Thyroid gland (tissue), 4 donors: ENCODE measurements at regions of chrX and their contacts with region 1.

Region 1: DNA sequence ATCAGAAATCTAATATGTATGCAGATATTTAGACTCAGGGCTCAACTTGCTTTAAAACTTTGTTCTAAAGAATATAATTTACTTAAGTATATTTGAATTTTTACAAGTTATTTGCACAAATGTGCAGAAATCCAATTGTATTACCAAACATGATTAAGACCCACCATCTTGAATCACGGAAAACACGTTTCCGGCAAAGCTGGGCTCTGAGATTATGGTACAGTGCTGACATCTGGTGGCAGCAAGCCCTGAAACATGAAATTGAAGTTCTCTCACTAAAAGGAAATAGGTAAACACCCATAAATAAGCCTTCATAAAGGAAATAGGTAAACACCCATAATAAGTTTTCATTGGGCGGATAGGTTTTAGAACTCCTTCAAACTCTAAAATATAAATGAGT is 98.3 kb upstream of the MAOA start:
- DNase-seq: peak; percentile 46 to 55
- H3K4me3 ChIP-seq: no peak overlapping the region
- H3K27ac ChIP-seq: no peak overlapping the region
- H3K4me1 ChIP-seq: peaks cover 0 to 2% of the 10 kb centered on the region in 2 donors
- H3K27me3 ChIP-seq: no peaks in the 10 kb centered on the region
- CTCF ChIP-seq: peak in 4 of 6 experiments; percentile 53 to 64 (median 60)
- POLR2A ChIP-seq: no peak

Region 2: DNA sequence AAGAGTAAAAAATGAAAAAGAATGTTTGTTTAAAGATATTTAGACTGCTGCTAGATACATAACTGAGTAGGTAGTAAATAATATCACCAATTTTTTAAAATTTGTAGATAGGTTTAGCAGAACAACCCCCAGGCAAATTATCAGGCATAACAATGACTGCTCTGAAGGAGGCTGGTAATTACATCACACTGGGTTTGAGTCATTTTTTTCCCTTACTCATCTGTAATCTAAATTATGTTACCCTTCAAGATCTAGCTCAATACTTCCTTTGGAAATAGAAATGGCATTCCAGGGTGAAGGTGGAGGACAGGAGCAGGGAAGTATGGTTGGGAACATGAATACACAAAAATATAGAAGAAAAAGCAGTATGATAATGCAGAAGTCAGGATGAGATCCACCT is 333.3 kb before region 1 on chrX:
- intact Hi-C with region 1: no loop called
- DNase-seq: no peak
- H3K4me3 ChIP-seq: no peak overlapping the region
- H3K27ac ChIP-seq: no peak overlapping the region
- H3K4me1 ChIP-seq: no peaks in the 10 kb centered on the region
- H3K27me3 ChIP-seq: no peaks in the 10 kb centered on the region
- CTCF ChIP-seq: no peak
- POLR2A ChIP-seq: no peak

Region 3: GRCh38 chrX:43349363-43349762 is 208.4 kb before region 1 on chrX:
- intact Hi-C with region 1: loop called (anchors 5 kb)
- DNase-seq: peak; percentile 21 to 36
- H3K4me3 ChIP-seq: no peak overlapping the region
- H3K27ac ChIP-seq: no peak overlapping the region
- H3K4me1 ChIP-seq: no peaks in the 10 kb centered on the region
- H3K27me3 ChIP-seq: no peaks in the 10 kb centered on the region
- CTCF ChIP-seq: peak in 4 of 6 experiments; percentile 49 to 57 (median 52)
- POLR2A ChIP-seq: no peak

Region 4: GRCh38 chrX:43750248-43750676 is 192.5 kb after region 1 on chrX:
- intact Hi-C with region 1: loop called (anchors 5 kb)
- DNase-seq: peak; percentile 55 to 57
- H3K4me3 ChIP-seq: no peak overlapping the region
- H3K27ac ChIP-seq: no peak overlapping the region
- H3K4me1 ChIP-seq: peaks cover 0 to 10% of the 10 kb centered on the region in 2 donors
- H3K27me3 ChIP-seq: no peaks in the 10 kb centered on the region
- CTCF ChIP-seq: peak in 5 of 6 experiments; percentile 28 to 70 (median 68)
- POLR2A ChIP-seq: no peak